ENCODE measurements at regions of chr6 and their contacts with region 1.

Region 1: GRCh38 chr6:150395398-150396009 is 26.7 kb downstream of the IYD start:
- DNase-seq: peak; percentile 51 to 53
- H3K4me3 ChIP-seq: no peak overlapping the region
- H3K27ac ChIP-seq: no peak overlapping the region
- H3K4me1 ChIP-seq: no peaks in the 10 kb centered on the region; a peak in 1 of 7 replicates
- H3K27me3 ChIP-seq: no peaks in the 10 kb centered on the region
- CTCF ChIP-seq: peak; percentile 43 to 79 (median 73)
- EP300 ChIP-seq: no peak
- POLR2A ChIP-seq: no peak
- RAD21 ChIP-seq: peak; percentile 83 to 90

Region 2: DNA sequence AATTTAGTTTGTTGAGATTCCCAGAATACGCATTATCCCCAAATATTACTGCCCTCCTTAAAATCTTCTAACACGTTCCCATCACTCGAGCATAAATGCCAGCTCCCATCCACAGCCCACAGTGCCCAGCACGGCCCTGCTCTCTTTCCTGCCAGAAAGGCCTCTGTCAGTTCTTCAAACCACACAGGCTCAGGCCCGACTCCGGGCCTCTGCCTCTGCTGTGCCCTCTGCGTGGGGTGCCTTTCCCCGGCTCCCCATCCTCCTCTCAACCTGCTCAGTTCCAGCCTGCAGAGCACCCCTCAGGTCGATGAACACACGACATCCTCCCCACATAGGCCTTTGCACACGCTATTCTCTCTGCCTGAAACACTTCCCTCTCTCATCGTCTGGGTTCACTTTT is 339.3 kb before region 1 on chr6:
- CTCF ChIA-PET with region 1: interaction called, 13 read pairs
- POLR2A ChIA-PET with region 1: no interaction called
- DNase-seq: no peak
- H3K4me3 ChIP-seq: no peak overlapping the region
- H3K27ac ChIP-seq: no peak overlapping the region
- H3K4me1 ChIP-seq: no peaks in the 10 kb centered on the region
- H3K27me3 ChIP-seq: peaks cover 0 to 2% (median 0%) of the 10 kb centered on the region in 4 experiments; a peak in 3 of 7 replicates
- CTCF ChIP-seq: no peak
- EP300 ChIP-seq: no peak
- POLR2A ChIP-seq: no peak
- RAD21 ChIP-seq: no peak

Region 3: GRCh38 chr6:150068720-150069648 is 326.5 kb before region 1 on chr6 and contains the start of gene ULBP3:
- CTCF ChIA-PET with region 1: interaction called, 52 read pairs
- POLR2A ChIA-PET with region 1: no interaction called
- DNase-seq: peak; percentile 76 to 85
- H3K4me3 ChIP-seq: peak within 1 kb of the TSS; percentile 49 to 73 (median 60)
- H3K27ac ChIP-seq: no peak within 1 kb of the TSS
- H3K4me1 ChIP-seq: peaks cover 0 to 2% (median 0%) of the 10 kb centered on the region in 4 experiments; a peak in 2 of 7 replicates
- H3K27me3 ChIP-seq: peaks cover 0 to 22% (median 13%) of the 10 kb centered on the region in 4 experiments; a peak in 5 of 7 replicates
- CTCF ChIP-seq: peak; percentile 25 to 58 (median 51)
- EP300 ChIP-seq: no peak
- POLR2A ChIP-seq: peak in 1 of 2 experiments; percentile 56; a peak in 1 of 3 replicates
- RAD21 ChIP-seq: peak; percentile 38 to 53; a peak in 3 of 4 replicates
- total RNA-seq, gene ULBP3: 3.3 and 4.2 TPM in 2 replicates

Region 4: GRCh38 chr6:150079604-150080003 is 315.9 kb before region 1 on chr6:
- CTCF ChIA-PET with region 1: interaction called, 52 read pairs
- POLR2A ChIA-PET with region 1: no interaction called
- DNase-seq: no peak
- H3K4me3 ChIP-seq: no peak overlapping the region
- H3K27ac ChIP-seq: no peak overlapping the region
- H3K4me1 ChIP-seq: peaks cover 0 to 3% (median 1%) of the 10 kb centered on the region in 4 experiments; a peak in 2 of 7 replicates
- H3K27me3 ChIP-seq: no peaks in the 10 kb centered on the region
- CTCF ChIP-seq: no peak
- EP300 ChIP-seq: no peak
- POLR2A ChIP-seq: no peak
- RAD21 ChIP-seq: no peak

Region 5: GRCh38 chr6:150301846-150302519 is 93.5 kb before region 1 on chr6:
- CTCF ChIA-PET with region 1: no interaction called
- POLR2A ChIA-PET with region 1: no interaction called
- DNase-seq: no peak
- H3K4me3 ChIP-seq: no peak overlapping the region
- H3K27ac ChIP-seq: no peak overlapping the region
- H3K4me1 ChIP-seq: no peaks in the 10 kb centered on the region
- H3K27me3 ChIP-seq: no peaks in the 10 kb centered on the region; a peak in 1 of 7 replicates
- CTCF ChIP-seq: no peak
- EP300 ChIP-seq: no peak
- POLR2A ChIP-seq: no peak
- RAD21 ChIP-seq: no peak

Region 6: GRCh38 chr6:150380256-150380655 is 15.2 kb before region 1 on chr6:
- CTCF ChIA-PET with region 1: interaction called, 15 read pairs
- POLR2A ChIA-PET with region 1: no interaction called
- DNase-seq: no peak
- H3K4me3 ChIP-seq: no peak overlapping the region
- H3K27ac ChIP-seq: no peak overlapping the region
- H3K4me1 ChIP-seq: no peaks in the 10 kb centered on the region
- H3K27me3 ChIP-seq: no peaks in the 10 kb centered on the region
- CTCF ChIP-seq: no peak
- EP300 ChIP-seq: no peak
- POLR2A ChIP-seq: no peak
- RAD21 ChIP-seq: no peak

Region 7: GRCh38 chr6:150409576-150410066 is 14.1 kb after region 1 on chr6:
- CTCF ChIA-PET with region 1: interaction called, 36 read pairs
- POLR2A ChIA-PET with region 1: no interaction called
- DNase-seq: no peak
- H3K4me3 ChIP-seq: no peak overlapping the region
- H3K27ac ChIP-seq: no peak overlapping the region
- H3K4me1 ChIP-seq: no peaks in the 10 kb centered on the region
- H3K27me3 ChIP-seq: no peaks in the 10 kb centered on the region; a peak in 1 of 7 replicates
- CTCF ChIP-seq: no peak
- EP300 ChIP-seq: no peak
- POLR2A ChIP-seq: no peak
- RAD21 ChIP-seq: no peak